ENCODE measurements at regions of chr3 and their contacts with region 1.

Region 1: GRCh38 chr3:12934431-12934830 is 93.1 kb upstream of the RPL32 start:
- DNase-seq: peak; percentile 83

Region 2: GRCh38 chr3:12663936-12664908 is 270.2 kb before region 1 on chr3 and contains the start of gene RAF1:
- intact Hi-C with region 1: no loop called
- DNase-seq: peak; percentile 99
- total RNA-seq, gene RAF1: 118 TPM

Region 3: DNA sequence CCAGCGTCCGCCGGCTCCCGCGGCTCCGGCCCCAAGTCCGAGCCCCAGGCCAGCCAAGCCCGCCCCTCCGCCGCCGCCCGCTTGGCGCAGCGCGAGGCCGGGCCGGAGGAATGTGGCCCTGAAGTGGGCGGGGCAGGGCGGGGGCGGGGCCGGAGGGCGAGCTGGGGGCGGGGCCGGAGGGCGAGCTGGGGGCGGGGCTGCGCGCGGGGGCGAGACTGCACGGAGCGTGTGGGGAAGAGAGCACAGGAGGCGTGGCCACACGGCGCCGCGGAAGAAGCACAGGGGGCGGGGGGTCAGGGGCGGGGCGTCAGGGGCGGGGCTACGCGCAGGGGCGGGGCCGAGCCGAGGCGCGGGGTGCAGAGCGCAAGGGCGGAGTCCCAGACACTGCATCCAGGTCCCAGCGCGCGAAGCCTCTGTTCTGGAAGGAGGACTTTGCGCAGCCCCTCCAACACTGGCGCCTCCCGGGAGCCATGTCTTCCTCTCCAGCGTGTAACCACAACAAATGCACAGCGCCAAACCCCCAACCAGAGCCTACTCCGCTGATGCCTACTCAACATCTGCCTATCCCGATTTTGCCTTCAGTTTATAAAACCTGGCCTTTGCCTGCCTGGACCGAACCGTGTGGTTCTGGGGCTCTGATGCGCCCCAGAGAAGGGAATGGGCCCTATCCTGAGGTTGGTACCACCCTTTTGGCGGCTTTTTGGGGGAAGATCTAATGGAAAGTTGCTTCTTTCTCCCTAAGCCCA is 33.3 kb after region 1 on chr3:
- intact Hi-C with region 1: loop called (anchors 2 kb)
- DNase-seq: peak; percentile 96

Region 4: DNA sequence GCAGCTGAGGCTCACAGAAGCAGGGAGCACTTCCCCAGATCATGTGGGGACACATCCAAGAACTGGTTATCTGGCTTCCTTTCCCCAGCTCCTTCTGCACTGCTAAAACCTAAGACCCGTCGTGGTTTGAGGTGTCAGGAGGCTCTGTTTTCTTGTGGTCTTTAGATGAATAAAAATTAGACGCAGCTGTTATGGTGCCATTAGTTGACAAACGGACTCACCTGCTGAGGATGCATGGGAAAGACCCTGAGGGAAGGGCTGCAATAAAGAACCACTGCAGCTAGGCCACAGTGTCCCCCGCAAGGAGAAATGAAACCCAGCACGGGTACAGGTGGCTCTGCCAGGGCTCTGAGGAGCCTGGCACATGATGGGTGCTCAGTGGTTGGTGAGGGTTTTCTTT is 39.4 kb after region 1 on chr3:
- intact Hi-C with region 1: loop called (anchors 1 kb)
- DNase-seq: no peak

Measured in cardiac septum (tissue), 1 donor.